Left ventricle myocardium superior (tissue), 1 donor: ENCODE measurements at regions of chr3 and their contacts with region 1.

Region 1: DNA sequence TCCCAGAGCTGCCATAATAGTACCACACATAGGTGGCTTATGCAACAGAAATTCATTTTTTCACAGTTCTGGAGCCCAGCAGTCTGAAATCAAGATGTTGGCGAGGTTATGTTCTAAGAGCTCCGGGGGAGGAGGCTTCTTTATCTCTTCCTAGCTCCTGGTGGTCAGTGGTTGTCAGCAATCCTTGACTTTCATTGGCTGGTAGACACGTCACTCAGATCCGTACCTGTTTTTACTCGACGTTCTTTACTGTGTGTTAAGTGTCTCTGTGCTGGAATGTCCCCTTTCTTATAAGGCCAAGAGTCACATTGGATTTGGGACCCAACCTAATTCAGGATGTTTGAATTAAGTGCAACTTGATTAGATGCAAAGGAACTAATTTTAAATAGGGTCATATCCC is 218.5 kb upstream of the CNTN3 start:
- DNase-seq: no peak
- ATAC-seq: no peak

Region 2: DNA sequence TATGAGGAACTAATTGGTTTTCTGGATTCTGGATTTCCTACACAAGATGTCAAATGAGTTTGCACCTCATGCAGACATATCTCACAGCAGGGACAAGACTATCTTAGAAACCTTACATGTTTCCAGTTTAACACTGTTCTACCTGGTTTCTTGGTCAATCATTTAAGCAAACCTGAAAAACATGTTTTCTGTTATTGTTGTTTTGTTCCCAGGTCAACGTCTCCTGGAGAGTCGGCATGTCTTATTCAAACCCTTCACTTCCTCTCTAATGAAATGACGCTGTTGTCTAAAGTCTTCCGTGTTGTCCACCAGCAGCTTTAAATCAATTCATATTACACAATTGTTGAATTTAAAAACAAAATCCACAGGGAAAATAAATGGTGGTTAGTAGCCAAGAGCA is 369.4 kb before region 1 on chr3:
- intact Hi-C with region 1: no loop called
- DNase-seq: no peak
- ATAC-seq: no peak

Region 3: DNA sequence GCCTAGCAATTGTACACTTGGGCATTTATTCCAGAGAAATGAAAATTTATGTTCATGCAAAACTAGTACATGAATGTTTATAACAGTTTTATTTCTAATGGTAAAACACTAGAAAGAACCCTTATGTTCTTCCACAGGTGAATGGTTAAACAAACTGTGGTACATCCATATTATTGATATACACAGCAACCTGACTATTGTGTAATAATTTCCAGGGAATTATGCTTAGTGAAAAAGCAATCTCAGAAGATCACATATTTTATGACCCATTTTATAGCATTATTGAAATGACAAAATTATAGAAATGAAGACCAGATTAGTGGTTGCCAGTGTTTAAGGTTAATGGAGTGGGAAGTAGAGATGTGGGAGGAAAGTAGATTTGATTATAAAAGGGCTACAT is 50.3 kb before region 1 on chr3:
- intact Hi-C with region 1: loop called (anchors 5 kb)
- DNase-seq: no peak
- ATAC-seq: no peak